ENCODE measurements at regions of chr14 and their contacts with region 1.

Region 1: GRCh38 chr14:20743256-20743959 is 2.3 kb upstream of the EDDM3A start:
- DNase-seq: peak; percentile 45
- H3K4me3 Mint-ChIP-seq: no peak overlapping the region
- H3K27ac Mint-ChIP-seq: no peak overlapping the region
- H3K4me1 Mint-ChIP-seq: peaks cover 32% of the 10 kb centered on the region
- H3K27me3 Mint-ChIP-seq: no peaks in the 10 kb centered on the region
- CTCF ChIP-seq: no peak

Region 2: GRCh38 chr14:20707622-20708021 is 35.8 kb before region 1 on chr14:
- CTCF ChIA-PET with region 1: no interaction called
- intact Hi-C with region 1: loop called (anchors 2 kb)
- DNase-seq: peak; percentile 75
- H3K4me3 Mint-ChIP-seq: no peak overlapping the region
- H3K27ac Mint-ChIP-seq: no peak overlapping the region
- H3K4me1 Mint-ChIP-seq: peaks cover 8% of the 10 kb centered on the region
- H3K27me3 Mint-ChIP-seq: no peaks in the 10 kb centered on the region
- CTCF ChIP-seq: no peak

Region 3: GRCh38 chr14:20723488-20723887 is 19.9 kb before region 1 on chr14:
- CTCF ChIA-PET with region 1: interaction called, 4 read pairs
- intact Hi-C with region 1: loop called (anchors 2 kb)
- DNase-seq: no peak
- H3K4me3 Mint-ChIP-seq: no peak overlapping the region
- H3K27ac Mint-ChIP-seq: peak overlapping the region; percentile 50
- H3K4me1 Mint-ChIP-seq: peaks cover 74% of the 10 kb centered on the region
- H3K27me3 Mint-ChIP-seq: no peaks in the 10 kb centered on the region
- CTCF ChIP-seq: no peak

Region 4: DNA sequence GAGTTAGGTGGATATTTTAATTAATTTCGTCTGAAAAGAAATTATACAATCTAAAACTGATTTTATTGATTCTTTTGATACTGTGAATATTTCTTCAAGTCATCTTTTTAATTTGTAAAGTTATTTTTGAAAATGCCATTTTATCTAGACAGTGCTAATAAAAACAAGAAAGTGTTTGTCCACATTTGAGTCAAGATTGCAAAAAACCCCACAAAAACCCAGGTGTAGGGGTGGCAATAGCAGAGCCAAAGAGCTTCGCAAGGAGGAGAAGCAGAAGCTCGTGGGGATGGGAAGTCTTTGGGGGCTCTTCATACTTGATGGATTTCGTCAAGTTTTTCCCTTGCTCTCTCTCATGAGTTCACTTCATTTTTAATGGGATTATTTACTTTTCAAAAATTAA is 43.6 kb after region 1 on chr14:
- CTCF ChIA-PET with region 1: no interaction called
- intact Hi-C with region 1: no loop called
- DNase-seq: no peak
- H3K4me3 Mint-ChIP-seq: no peak overlapping the region
- H3K27ac Mint-ChIP-seq: no peak overlapping the region
- H3K4me1 Mint-ChIP-seq: no peaks in the 10 kb centered on the region
- H3K27me3 Mint-ChIP-seq: no peaks in the 10 kb centered on the region
- CTCF ChIP-seq: no peak

Region 5: GRCh38 chr14:20799892-20800544 is 56.6 kb after region 1 on chr14:
- CTCF ChIA-PET with region 1: no interaction called
- intact Hi-C with region 1: loop called (anchors 10 kb)
- DNase-seq: peak; percentile 15
- H3K4me3 Mint-ChIP-seq: no peak overlapping the region
- H3K27ac Mint-ChIP-seq: no peak overlapping the region
- H3K4me1 Mint-ChIP-seq: peaks cover 37% of the 10 kb centered on the region
- H3K27me3 Mint-ChIP-seq: no peaks in the 10 kb centered on the region
- CTCF ChIP-seq: no peak

Region 6: GRCh38 chr14:21536418-21537089 is 793.1 kb after region 1 on chr14:
- CTCF ChIA-PET with region 1: no interaction called
- intact Hi-C with region 1: no loop called
- DNase-seq: no peak
- H3K4me3 Mint-ChIP-seq: peak overlapping the region; percentile 12
- H3K27ac Mint-ChIP-seq: no peak overlapping the region
- H3K4me1 Mint-ChIP-seq: peaks cover 14% of the 10 kb centered on the region
- H3K27me3 Mint-ChIP-seq: peaks cover 75% of the 10 kb centered on the region
- CTCF ChIP-seq: no peak